ENCODE measurements at regions of chr17 and their contacts with region 1.

Region 1: GRCh38 chr17:20226814-20227482 is 217.8 kb downstream of the SPECC1 start:
- DNase-seq: peak; percentile 87
- H3K4me3 Mint-ChIP-seq: no peak overlapping the region
- H3K27ac Mint-ChIP-seq: no peak overlapping the region
- H3K4me1 Mint-ChIP-seq: peaks cover 20% of the 10 kb centered on the region
- H3K27me3 Mint-ChIP-seq: no peaks in the 10 kb centered on the region

Region 2: GRCh38 chr17:19992803-19993713 is 233.9 kb before region 1 on chr17:
- CTCF ChIA-PET with region 1: interaction called, 16 read pairs
- POLR2A ChIA-PET with region 1: no interaction called
- intact Hi-C with region 1: loop called (anchors 5 kb)
- DNase-seq: peak; percentile 85
- H3K4me3 Mint-ChIP-seq: peak overlapping the region; percentile 16
- H3K27ac Mint-ChIP-seq: no peak overlapping the region
- H3K4me1 Mint-ChIP-seq: peaks cover 9% of the 10 kb centered on the region
- H3K27me3 Mint-ChIP-seq: peaks cover 5% of the 10 kb centered on the region

Region 3: DNA sequence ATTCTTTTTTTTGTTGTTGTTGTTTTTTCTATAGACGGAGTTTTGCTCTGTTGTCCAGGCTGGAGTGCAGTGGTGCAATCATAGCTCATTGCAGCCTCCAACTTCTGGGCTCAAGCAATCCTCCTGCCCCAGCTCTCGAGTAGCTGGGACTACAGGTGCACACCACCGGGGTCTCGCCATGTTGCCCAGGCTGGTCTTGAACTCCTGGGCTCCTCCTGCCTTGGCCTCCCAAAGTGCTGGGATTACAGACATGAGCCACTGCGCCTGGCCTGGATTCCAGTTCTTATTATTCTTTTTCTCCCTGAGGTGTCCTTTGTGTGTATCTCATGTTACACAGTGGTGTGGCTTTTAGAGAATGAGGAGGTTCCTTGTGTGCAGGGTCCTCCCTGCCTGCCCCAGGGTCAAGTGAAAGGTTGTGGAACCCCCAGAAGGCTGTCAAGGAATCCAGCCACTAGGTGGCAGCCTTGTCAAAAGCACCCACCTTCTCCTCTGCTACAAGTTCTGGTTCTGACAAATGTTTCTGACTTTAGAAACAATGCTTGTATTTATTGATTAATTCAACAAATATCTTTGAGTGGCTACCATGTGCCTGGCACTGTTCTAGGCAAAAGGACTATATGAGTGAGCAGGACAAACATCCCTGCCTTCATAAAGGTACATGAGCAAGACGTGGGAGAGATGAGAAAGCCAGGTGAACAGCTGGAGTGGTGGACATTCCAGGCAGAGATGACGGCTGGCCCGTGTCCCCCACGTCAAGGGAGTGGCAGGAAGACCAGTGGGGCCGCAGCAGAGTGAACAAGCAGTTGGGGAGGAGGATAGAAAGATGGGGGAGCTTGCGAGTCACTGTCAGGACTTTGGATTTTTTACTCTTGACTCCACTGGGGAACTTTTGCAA is 105.3 kb before region 1 on chr17:
- CTCF ChIA-PET with region 1: interaction called, 47 read pairs
- POLR2A ChIA-PET with region 1: interaction called, 3 read pairs
- intact Hi-C with region 1: loop called (anchors 1 kb)
- DNase-seq: peak; percentile 74
- H3K4me3 Mint-ChIP-seq: no peak overlapping the region
- H3K27ac Mint-ChIP-seq: no peak overlapping the region
- H3K4me1 Mint-ChIP-seq: no peaks in the 10 kb centered on the region
- H3K27me3 Mint-ChIP-seq: no peaks in the 10 kb centered on the region

Region 4: DNA sequence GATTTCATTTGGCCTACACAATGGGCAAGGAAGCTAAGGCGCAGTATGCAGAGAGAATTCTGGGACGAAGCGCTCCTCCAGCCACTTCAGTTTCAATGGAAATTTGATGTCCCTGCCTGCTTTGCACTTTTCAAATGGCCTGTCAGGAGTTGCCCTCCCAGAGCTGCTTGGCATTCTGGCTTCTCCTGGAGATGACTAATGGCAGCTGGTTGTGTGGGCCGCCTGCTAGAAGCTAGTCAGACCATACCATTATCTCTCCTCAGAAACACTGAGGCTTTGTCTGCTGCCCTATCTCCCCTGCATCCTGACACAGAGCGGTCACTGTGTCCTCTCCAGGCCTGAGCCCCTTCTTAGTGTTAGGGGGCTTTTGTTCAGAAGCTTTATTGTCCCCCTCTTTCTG is 37.6 kb before region 1 on chr17:
- CTCF ChIA-PET with region 1: no interaction called
- POLR2A ChIA-PET with region 1: no interaction called
- intact Hi-C with region 1: no loop called
- DNase-seq: no peak
- H3K4me3 Mint-ChIP-seq: no peak overlapping the region
- H3K27ac Mint-ChIP-seq: no peak overlapping the region
- H3K4me1 Mint-ChIP-seq: peaks cover 3% of the 10 kb centered on the region
- H3K27me3 Mint-ChIP-seq: no peaks in the 10 kb centered on the region

Region 5: DNA sequence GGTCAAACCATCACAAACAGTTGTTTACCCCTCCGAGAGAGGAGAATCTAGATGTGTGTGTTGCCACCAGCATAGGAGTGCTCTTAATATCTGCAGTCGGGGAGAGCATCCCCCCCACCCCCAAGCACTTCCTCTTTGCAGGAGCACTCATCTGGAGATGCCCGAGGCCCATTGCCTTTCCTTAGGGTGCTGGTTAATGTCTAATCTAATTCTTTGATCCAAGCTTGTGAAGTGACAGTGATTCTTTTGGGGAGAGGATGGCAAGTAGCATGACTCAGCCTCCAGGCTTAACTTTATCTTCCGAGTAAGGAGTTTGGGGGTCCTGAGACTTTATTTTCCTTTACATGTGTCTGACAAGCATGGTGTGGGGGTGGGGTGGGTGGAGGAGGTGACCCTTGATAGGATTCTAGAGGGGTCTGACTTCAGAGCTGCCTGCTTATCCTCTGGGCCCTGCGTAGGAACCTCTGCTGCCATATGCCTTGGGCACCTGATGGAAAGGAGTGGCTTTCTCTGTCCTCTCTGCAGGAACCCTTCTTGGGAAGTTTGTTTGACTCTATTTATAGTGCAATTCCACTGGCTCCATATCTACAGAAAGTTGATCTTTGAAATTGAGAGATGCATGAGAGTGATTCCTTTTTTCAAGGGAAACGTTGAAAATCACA is 10.7 kb before region 1 on chr17:
- CTCF ChIA-PET with region 1: interaction called, 17 read pairs
- POLR2A ChIA-PET with region 1: no interaction called
- intact Hi-C with region 1: no loop called
- DNase-seq: no peak
- H3K4me3 Mint-ChIP-seq: no peak overlapping the region
- H3K27ac Mint-ChIP-seq: no peak overlapping the region
- H3K4me1 Mint-ChIP-seq: no peaks in the 10 kb centered on the region
- H3K27me3 Mint-ChIP-seq: no peaks in the 10 kb centered on the region

Region 6: DNA sequence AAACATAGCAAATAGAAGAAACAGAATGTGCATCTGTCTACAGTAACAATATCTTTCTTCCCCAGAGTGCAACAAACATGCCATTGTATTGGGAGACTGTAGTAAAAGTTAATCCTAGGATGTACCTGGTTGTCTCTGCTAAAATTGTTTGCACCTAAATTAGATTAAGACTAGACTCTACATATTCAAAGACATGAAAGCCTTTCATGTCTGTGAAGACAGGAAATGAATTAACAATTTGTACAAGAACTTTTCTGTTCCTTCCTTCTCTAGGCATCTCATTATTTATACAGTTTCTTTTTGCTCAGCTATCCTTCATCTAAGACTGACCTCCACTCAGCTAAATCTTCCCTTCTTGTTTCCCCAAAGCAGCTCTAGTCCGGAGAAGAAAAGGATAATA is 19.7 kb after region 1 on chr17:
- CTCF ChIA-PET with region 1: interaction called, 11 read pairs
- POLR2A ChIA-PET with region 1: no interaction called
- intact Hi-C with region 1: no loop called
- DNase-seq: no peak
- H3K4me3 Mint-ChIP-seq: no peak overlapping the region
- H3K27ac Mint-ChIP-seq: no peak overlapping the region
- H3K4me1 Mint-ChIP-seq: peaks cover 21% of the 10 kb centered on the region
- H3K27me3 Mint-ChIP-seq: no peaks in the 10 kb centered on the region

Region 7: DNA sequence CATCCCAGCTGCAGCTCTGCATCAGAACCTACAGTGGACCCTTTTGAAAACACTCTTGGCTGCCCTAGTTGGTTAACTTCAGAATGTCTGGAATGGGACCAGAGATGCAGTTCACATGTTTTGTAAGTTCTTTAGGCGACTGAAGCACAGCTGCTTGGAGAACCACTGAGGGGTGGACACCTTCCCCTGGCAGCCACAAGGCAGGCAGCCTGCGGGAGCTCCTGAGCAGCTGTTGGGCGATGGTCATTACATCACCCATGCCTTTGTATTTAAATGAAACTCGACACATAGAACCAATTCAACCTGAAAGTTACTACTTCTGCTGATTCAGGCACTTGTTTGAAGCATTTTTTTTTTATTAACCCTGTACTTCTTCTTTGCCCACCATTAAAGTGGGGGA is 88.9 kb after region 1 on chr17:
- CTCF ChIA-PET with region 1: interaction called, 36 read pairs
- POLR2A ChIA-PET with region 1: no interaction called
- intact Hi-C with region 1: loop called (anchors 1 kb)
- DNase-seq: no peak
- H3K4me3 Mint-ChIP-seq: no peak overlapping the region
- H3K27ac Mint-ChIP-seq: no peak overlapping the region
- H3K4me1 Mint-ChIP-seq: no peaks in the 10 kb centered on the region
- H3K27me3 Mint-ChIP-seq: no peaks in the 10 kb centered on the region